ENCODE measurements at regions of chr1 and their contacts with region 1.

Region 1: GRCh38 chr1:183227963-183228649 is 42.0 kb downstream of the LAMC2 start:
- DNase-seq: no peak
- ATAC-seq: peak; percentile 85
- H3K4me3 ChIP-seq: no peak overlapping the region
- H3K27ac ChIP-seq: no peak overlapping the region
- H3K4me1 ChIP-seq: no peaks in the 10 kb centered on the region
- H3K27me3 ChIP-seq: no peaks in the 10 kb centered on the region
- CTCF ChIP-seq: peak; percentile 76

Region 2: GRCh38 chr1:182962554-182963115 is 265.5 kb before region 1 on chr1:
- intact Hi-C with region 1: loop called (anchors 10 kb)
- DNase-seq: peak; percentile 79
- ATAC-seq: peak; percentile 100
- H3K4me3 ChIP-seq: peak overlapping the region; percentile 12
- H3K27ac ChIP-seq: no peak overlapping the region
- H3K4me1 ChIP-seq: no peaks in the 10 kb centered on the region
- H3K27me3 ChIP-seq: no peaks in the 10 kb centered on the region
- CTCF ChIP-seq: peak; percentile 90

Region 3: DNA sequence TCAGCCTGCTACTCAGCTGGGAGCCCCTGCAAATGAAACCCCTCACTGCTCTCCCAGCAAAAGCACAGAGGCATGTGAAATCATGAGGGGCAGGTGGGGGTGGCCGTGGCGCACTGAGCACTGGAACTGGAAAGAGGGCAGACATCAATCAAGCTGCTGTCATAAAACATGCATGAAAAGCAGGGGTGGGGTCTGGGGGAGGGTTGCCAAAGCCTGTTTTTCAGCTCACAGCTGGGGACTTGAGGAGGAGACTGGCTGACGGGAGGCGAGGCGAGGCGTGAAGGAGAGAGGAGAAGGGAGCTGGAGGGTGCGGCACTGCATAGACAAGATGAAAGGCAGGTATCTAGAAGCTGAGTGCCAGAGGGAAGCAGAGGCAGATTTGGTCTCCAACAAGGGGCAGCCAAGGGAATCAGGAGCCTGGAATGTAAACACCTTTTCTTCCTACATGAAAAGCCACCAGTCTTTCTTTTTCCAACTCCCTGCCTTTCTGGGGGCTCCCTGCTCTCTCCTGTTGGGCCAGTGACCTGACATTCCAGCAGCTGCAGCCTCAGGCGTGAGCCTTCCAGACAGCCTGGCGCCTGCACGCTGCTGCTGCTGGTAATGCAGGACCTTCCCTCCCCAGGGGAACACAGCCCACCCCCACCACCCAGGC is 103.1 kb after region 1 on chr1:
- intact Hi-C with region 1: no loop called
- DNase-seq: no peak
- ATAC-seq: peak; percentile 22
- H3K4me3 ChIP-seq: no peak overlapping the region
- H3K27ac ChIP-seq: no peak overlapping the region
- H3K4me1 ChIP-seq: no peaks in the 10 kb centered on the region
- H3K27me3 ChIP-seq: no peaks in the 10 kb centered on the region
- CTCF ChIP-seq: no peak

Measured in upper lobe of right lung (tissue), 1 donor.